ENCODE measurements at regions of chr15 and their contacts with region 1.

Region 1: DNA sequence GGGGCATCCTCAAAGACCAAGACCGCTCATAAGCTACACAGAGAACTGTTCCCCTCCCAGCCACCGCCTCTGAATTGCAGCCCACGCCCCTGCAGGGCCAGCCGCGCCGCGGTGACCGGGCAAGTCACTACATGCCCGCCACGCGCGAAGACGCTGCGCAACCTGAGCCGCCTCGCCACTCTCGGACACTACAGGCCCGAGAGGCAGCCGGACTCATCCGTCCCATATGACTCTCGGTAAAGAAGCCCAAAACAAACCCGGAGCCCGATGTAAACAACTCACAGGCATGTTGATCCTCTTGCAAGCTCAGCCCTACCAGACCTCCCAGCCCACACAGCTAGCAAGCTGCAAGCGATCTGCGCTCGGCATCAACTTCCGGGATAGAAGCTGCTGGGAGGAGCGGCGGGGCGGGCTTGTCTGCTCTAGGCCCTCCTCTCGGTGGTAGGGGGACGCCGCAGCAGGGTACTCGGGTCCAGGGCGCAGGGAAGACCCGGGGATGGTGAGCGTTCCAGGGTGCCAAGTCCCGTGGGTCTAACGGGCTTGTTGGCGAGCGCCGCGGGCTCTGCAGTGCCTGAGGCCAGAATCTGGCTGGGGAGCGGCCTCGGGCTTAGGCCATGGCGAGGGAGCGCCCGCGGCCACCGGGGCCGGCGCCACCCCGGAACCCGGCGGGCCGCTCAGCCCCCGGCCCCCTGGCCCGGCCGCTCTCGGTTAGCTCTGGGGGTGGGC is at the start of gene RPS27L:
- DNase-seq: peak; percentile 74 to 92 (median 86)
- ATAC-seq: peak; percentile 97
- H3K4me3 ChIP-seq: peak within 1 kb of the TSS; percentile 95
- H3K4me3 Mint-ChIP-seq: peak within 1 kb of the TSS; percentile 100
- H3K27ac ChIP-seq: peak within 1 kb of the TSS; percentile 53 to 70
- H3K27ac Mint-ChIP-seq: peak within 1 kb of the TSS; percentile 98
- H3K4me1 ChIP-seq: peaks cover 10% of the 10 kb centered on the region
- H3K4me1 Mint-ChIP-seq: peaks cover 36% of the 10 kb centered on the region
- H3K27me3 ChIP-seq: no peaks in the 10 kb centered on the region
- H3K27me3 Mint-ChIP-seq: no peaks in the 10 kb centered on the region
- CTCF ChIP-seq: no peak
- total RNA-seq, gene RPS27L: 40.0 to 43.1 TPM

Region 2: DNA sequence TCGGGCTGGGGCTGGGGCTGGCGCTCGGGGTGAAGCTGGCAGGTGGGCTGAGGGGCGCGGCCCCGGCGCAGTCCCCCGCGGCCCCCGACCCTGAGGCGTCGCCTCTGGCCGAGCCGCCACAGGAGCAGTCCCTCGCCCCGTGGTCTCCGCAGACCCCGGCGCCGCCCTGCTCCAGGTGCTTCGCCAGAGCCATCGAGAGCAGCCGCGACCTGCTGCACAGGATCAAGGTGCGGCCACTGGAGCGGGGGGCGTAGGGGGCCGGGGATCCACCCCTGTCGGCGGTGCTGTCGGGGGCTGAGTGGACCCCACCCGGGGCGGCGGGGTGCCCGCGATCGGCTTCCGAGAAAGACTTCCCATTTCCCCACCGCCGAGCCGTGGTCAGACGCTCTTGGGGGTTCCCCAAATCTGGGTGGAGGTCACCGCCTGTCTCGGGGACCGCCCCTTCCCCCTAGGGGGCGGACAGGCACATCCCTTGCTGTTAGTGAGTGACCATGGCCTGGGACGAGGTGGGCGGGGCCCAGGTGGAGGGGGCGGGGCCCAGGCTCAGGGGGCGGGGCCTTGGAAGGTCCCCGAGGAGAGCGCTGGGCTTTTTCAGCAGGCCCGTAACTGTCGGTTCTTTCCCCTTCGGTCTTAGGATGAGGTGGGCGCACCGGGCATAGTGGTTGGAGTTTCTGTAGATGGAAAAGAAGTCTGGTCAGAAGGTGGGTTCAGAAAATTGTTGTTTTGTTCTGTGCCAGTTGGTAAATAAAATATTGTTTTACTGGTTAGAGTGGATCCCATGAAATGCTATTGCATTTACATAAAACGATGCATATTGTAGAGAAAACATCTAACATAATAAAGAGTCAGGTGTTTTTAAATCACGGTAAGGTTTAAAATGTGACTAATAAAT is 35.0 kb before region 1 on chr15:
- CTCF ChIA-PET with region 1: no interaction called
- POLR2A ChIA-PET with region 1: no interaction called
- intact Hi-C with region 1: loop called in 1 of 2 experiments (anchors 2 kb)
- DNase-seq: peak; percentile 48 to 91 (median 65)
- ATAC-seq: peak; percentile 71
- H3K4me3 ChIP-seq: peak overlapping the region; percentile 90
- H3K4me3 Mint-ChIP-seq: peak overlapping the region; percentile 96
- H3K27ac ChIP-seq: peak overlapping the region; percentile 64 to 67
- H3K27ac Mint-ChIP-seq: peak overlapping the region; percentile 89
- H3K4me1 ChIP-seq: peaks cover 10% of the 10 kb centered on the region
- H3K4me1 Mint-ChIP-seq: peaks cover 17% of the 10 kb centered on the region
- H3K27me3 ChIP-seq: no peaks in the 10 kb centered on the region
- H3K27me3 Mint-ChIP-seq: no peaks in the 10 kb centered on the region
- CTCF ChIP-seq: no peak

Region 3: DNA sequence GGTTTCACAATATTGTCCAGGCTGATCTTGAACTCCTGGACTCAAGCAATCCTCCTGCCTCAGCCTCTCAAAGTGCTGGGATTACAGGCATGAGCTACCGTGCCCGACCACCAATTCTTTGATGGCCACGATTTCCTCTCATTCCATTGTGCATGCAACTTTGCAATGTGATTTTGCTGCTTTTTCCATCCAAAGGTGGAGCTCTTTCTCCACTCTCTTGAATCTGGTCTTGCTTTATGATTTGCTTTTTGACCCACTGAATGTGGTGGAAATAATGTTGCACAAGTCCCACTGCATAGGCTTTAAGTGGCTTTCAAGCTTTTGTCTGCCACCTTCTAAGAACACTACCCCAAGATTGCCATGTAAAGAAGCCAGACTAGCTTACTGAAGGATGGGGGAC is 10.6 kb before region 1 on chr15:
- CTCF ChIA-PET with region 1: no interaction called
- POLR2A ChIA-PET with region 1: interaction called, 13 read pairs
- intact Hi-C with region 1: no loop called
- DNase-seq: peak in 1 of 14 experiments; percentile 6
- ATAC-seq: no peak
- H3K4me3 ChIP-seq: no peak overlapping the region
- H3K4me3 Mint-ChIP-seq: no peak overlapping the region
- H3K27ac ChIP-seq: no peak overlapping the region
- H3K27ac Mint-ChIP-seq: no peak overlapping the region
- H3K4me1 ChIP-seq: no peaks in the 10 kb centered on the region
- H3K4me1 Mint-ChIP-seq: peaks cover 12% of the 10 kb centered on the region
- H3K27me3 ChIP-seq: no peaks in the 10 kb centered on the region
- H3K27me3 Mint-ChIP-seq: no peaks in the 10 kb centered on the region
- CTCF ChIP-seq: no peak

Region 4: GRCh38 chr15:63246691-63247464 is 89.6 kb after region 1 on chr15:
- CTCF ChIA-PET with region 1: no interaction called
- POLR2A ChIA-PET with region 1: interaction called, 5 read pairs
- intact Hi-C with region 1: loop called in 1 of 2 experiments (anchors 5 kb)
- DNase-seq: peak in 2 of 14 experiments; percentile 58 to 68
- ATAC-seq: no peak
- H3K4me3 ChIP-seq: no peak overlapping the region
- H3K4me3 Mint-ChIP-seq: no peak overlapping the region
- H3K27ac ChIP-seq: no peak overlapping the region
- H3K27ac Mint-ChIP-seq: peak overlapping the region; percentile 64
- H3K4me1 ChIP-seq: peaks cover 27% of the 10 kb centered on the region
- H3K4me1 Mint-ChIP-seq: peaks cover 69% of the 10 kb centered on the region
- H3K27me3 ChIP-seq: no peaks in the 10 kb centered on the region
- H3K27me3 Mint-ChIP-seq: no peaks in the 10 kb centered on the region
- CTCF ChIP-seq: no peak

Region 5: GRCh38 chr15:63277038-63277892 is 120.0 kb after region 1 on chr15 and contains the start of gene APH1B:
- CTCF ChIA-PET with region 1: no interaction called
- POLR2A ChIA-PET with region 1: interaction called, 6 read pairs
- intact Hi-C with region 1: loop called (anchors 2 kb)
- DNase-seq: peak; percentile 61 to 94 (median 79)
- ATAC-seq: peak; percentile 88
- H3K4me3 ChIP-seq: peak within 1 kb of the TSS; percentile 86
- H3K4me3 Mint-ChIP-seq: peak within 1 kb of the TSS; percentile 91
- H3K27ac ChIP-seq: peak within 1 kb of the TSS; percentile 71 to 80
- H3K27ac Mint-ChIP-seq: peak within 1 kb of the TSS; percentile 82
- H3K4me1 ChIP-seq: peaks cover 25% of the 10 kb centered on the region
- H3K4me1 Mint-ChIP-seq: peaks cover 48% of the 10 kb centered on the region
- H3K27me3 ChIP-seq: no peaks in the 10 kb centered on the region
- H3K27me3 Mint-ChIP-seq: no peaks in the 10 kb centered on the region
- CTCF ChIP-seq: no peak
- total RNA-seq, gene APH1B: 9.3 to 11.6 TPM